HepG2 (cell line): ENCODE measurements at regions of chr2 and their contacts with region 1.

Region 1: GRCh38 chr2:73085691-73086360 is 14.3 kb upstream of the SFXN5 start:
- DNase-seq: peak; percentile 74
- ATAC-seq: peak; percentile 90
- H3K4me3 ChIP-seq: no peak overlapping the region
- H3K27ac ChIP-seq: no peak overlapping the region
- H3K4me1 ChIP-seq: peaks cover 16% of the 10 kb centered on the region
- H3K27me3 ChIP-seq: no peaks in the 10 kb centered on the region
- CTCF ChIP-seq: peak; percentile 99
- EP300 ChIP-seq: no peak
- POLR2A ChIP-seq: no peak
- RAD21 ChIP-seq: peak; percentile 99

Region 2: GRCh38 chr2:73117441-73117840 is 31.6 kb after region 1 on chr2:
- CTCF ChIA-PET with region 1: no interaction called
- POLR2A ChIA-PET with region 1: no interaction called
- in situ Hi-C with region 1: no loop called
- intact Hi-C with region 1: no loop called
- DNase-seq: no peak
- ATAC-seq: no peak
- H3K4me3 ChIP-seq: no peak overlapping the region
- H3K27ac ChIP-seq: no peak overlapping the region
- H3K4me1 ChIP-seq: peaks cover 40% of the 10 kb centered on the region
- H3K27me3 ChIP-seq: no peaks in the 10 kb centered on the region; a peak in 1 of 5 replicates
- CTCF ChIP-seq: no peak
- EP300 ChIP-seq: no peak
- POLR2A ChIP-seq: no peak
- RAD21 ChIP-seq: no peak

Region 3: GRCh38 chr2:73142937-73143336 is 57.1 kb after region 1 on chr2:
- CTCF ChIA-PET with region 1: no interaction called
- POLR2A ChIA-PET with region 1: no interaction called
- in situ Hi-C with region 1: no loop called
- intact Hi-C with region 1: no loop called
- DNase-seq: no peak
- ATAC-seq: peak; percentile 76
- H3K4me3 ChIP-seq: peak overlapping the region in 2 of 3 experiments; percentile 2 to 37; a peak in 2 of 6 replicates
- H3K27ac ChIP-seq: no peak overlapping the region
- H3K4me1 ChIP-seq: no peaks in the 10 kb centered on the region
- H3K27me3 ChIP-seq: peaks cover 0 to 9% of the 10 kb centered on the region in 2 experiments; a peak in 2 of 5 replicates
- CTCF ChIP-seq: no peak
- EP300 ChIP-seq: no peak
- POLR2A ChIP-seq: no peak
- RAD21 ChIP-seq: no peak

Region 4: GRCh38 chr2:73156539-73157124 is 70.8 kb after region 1 on chr2:
- CTCF ChIA-PET with region 1: interaction called, 54 read pairs
- POLR2A ChIA-PET with region 1: no interaction called
- in situ Hi-C with region 1: loop called (anchors 5 kb)
- intact Hi-C with region 1: loop called (anchors 1 kb)
- DNase-seq: peak; percentile 62
- ATAC-seq: peak; percentile 98
- H3K4me3 ChIP-seq: peak overlapping the region in 1 of 3 experiments; percentile 12; a peak in 1 of 6 replicates
- H3K27ac ChIP-seq: no peak overlapping the region
- H3K4me1 ChIP-seq: peaks cover 10% of the 10 kb centered on the region
- H3K27me3 ChIP-seq: peaks cover 4 to 24% of the 10 kb centered on the region in 2 experiments; a peak in 3 of 5 replicates
- CTCF ChIP-seq: peak; percentile 100
- EP300 ChIP-seq: no peak
- POLR2A ChIP-seq: no peak
- RAD21 ChIP-seq: peak; percentile 98

Region 5: DNA sequence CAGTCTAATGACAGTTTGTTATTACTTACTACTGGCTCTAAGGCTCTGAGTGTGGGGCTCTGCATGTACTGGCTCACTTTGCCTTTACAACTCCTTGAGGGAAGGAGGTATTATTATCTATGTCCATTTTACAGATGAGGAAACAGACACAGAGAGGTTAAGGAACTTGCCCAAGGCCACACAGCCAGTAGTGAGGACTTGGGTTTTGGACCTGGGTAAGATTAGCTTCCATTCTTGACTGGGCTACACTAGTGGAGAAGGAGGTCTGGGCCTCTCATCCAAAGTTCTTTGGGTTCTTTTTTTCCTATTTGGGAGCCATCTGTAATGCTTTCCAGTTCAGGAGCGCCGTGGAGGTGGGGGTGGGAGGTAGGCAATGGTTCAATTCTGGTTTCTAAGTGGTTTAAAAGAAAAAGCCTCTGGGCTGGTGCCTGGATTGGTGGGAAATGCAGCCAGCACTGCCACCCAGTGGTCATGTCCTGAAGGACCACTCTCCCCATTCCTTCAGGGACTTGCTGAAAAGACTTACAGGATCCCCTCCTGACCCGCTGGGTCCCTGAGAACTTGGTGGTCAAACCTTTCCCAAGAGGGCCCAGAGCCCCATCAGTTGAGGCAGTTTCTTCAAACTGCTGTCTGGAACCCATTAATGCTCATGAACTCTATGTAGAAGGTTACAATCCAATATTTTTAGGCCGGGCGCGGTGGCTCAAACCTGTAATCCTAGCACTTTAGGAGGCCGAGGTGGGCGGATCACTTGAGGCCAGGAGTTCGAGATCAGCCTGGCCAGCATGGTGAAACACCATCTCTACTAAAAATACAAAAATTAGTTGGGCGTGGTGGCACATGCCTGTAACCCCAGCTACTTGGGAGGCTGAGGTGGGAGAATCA is 77.9 kb after region 1 on chr2:
- CTCF ChIA-PET with region 1: interaction called, 22 read pairs
- POLR2A ChIA-PET with region 1: no interaction called
- in situ Hi-C with region 1: loop called (anchors 5 kb)
- intact Hi-C with region 1: loop called (anchors 1 kb)
- DNase-seq: peak; percentile 71
- ATAC-seq: peak; percentile 92
- H3K4me3 ChIP-seq: no peak overlapping the region
- H3K27ac ChIP-seq: no peak overlapping the region
- H3K4me1 ChIP-seq: no peaks in the 10 kb centered on the region
- H3K27me3 ChIP-seq: peaks cover 4 to 8% of the 10 kb centered on the region in 2 experiments; a peak in 4 of 5 replicates
- CTCF ChIP-seq: peak; percentile 89
- EP300 ChIP-seq: no peak
- POLR2A ChIP-seq: no peak
- RAD21 ChIP-seq: peak; percentile 90

Region 6: DNA sequence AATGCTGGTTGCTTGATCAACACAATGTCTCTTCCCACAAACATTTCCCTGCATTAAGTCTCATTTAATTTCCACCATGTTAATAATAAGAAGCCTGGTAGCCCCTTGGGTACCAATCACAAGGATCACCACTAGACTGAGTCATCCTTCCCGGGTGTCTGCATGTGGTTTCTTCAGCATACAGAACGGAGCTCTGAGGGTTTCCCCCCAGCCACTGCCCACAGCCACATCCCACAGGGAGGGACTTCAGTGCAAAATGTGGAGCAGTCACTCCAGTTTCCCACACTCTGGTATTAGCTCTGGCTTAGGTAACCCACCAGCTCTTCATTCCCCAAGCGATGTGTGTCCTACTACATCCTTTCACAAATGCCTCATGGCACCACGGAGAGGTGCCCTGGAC is 1829.9 kb after region 1 on chr2:
- CTCF ChIA-PET with region 1: no interaction called
- POLR2A ChIA-PET with region 1: no interaction called
- in situ Hi-C with region 1: no loop called
- intact Hi-C with region 1: no loop called
- DNase-seq: no peak
- ATAC-seq: no peak
- H3K4me3 ChIP-seq: no peak overlapping the region
- H3K27ac ChIP-seq: no peak overlapping the region
- H3K4me1 ChIP-seq: peaks cover 44% of the 10 kb centered on the region
- H3K27me3 ChIP-seq: peaks cover 0 to 7% of the 10 kb centered on the region in 2 experiments; a peak in 1 of 5 replicates
- CTCF ChIP-seq: no peak
- EP300 ChIP-seq: no peak
- POLR2A ChIP-seq: no peak
- RAD21 ChIP-seq: no peak